Posterior vena cava (tissue), 2 donors: ENCODE measurements at regions of chr6 and their contacts with region 1.

Region 1: DNA sequence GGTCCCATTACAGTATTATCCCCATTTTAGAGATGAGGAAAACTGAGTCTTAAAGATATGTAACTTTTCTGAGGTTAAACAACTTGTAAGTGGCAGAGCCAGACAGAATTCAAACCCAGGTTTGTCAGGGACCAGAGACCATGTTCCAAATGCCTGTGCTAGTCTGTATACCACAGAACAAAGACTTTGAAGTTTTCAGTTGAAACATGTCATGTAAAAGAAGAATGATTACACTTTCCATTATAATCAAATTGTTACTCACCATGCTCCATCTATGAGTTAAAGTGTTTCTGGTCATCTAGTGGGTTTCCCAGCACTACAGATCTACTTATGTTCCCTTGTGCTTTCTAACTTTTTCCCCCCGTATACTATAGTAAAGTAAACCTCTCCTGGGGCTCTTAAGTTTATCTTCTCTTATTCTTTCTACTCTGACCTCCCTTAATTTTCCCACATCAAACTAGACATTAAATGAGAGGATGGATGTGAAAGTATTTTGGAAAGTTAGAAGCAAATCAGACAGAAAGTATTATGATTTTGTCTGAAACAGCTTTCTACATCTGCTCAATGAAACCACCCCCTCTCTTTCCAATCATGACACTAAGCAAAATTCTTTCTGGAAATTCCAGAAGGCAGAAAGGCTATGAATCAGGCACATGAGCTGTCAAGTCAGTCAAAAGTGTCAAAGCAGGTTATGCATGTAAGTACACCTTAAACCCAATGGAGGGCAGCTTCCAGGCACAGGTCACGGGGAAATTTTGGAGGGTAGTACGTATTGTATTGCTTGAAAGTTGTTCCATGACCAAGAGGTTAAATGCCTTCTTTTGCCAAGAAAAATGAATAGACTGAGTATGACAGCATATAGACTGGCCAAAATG is 132.7 kb upstream of the MAP3K7 start:
- DNase-seq: no peak

Region 2: DNA sequence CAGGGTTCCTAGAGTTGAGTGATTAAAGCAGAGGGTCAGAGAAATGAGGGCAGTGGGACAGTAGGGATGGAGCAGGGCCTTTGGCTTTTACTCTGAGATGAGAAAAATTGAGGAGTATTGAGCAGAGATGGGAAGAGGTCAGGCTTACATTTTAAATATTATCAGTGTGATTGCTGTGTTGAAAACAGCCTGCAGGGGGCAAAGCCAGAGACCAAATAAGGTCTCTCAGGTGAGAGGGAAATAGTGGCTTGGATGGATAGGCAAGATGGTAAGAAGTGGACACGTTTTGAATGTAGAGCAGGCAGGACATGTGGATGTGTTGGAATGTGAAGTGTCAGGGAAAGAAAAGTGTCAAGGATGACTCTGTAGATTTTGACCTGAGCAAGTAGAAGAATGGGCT is 27.7 kb before region 1 on chr6:
- intact Hi-C with region 1: loop called in 1 of 2 experiments (anchors 1 kb)
- DNase-seq: no peak